ENCODE measurements at regions of chr3 and their contacts with region 1.

Region 1: GRCh38 chr3:39189959-39190269 is 2.5 kb downstream of the XIRP1 start:
- DNase-seq: peak; percentile 64
- ATAC-seq: peak; percentile 46

Region 2: DNA sequence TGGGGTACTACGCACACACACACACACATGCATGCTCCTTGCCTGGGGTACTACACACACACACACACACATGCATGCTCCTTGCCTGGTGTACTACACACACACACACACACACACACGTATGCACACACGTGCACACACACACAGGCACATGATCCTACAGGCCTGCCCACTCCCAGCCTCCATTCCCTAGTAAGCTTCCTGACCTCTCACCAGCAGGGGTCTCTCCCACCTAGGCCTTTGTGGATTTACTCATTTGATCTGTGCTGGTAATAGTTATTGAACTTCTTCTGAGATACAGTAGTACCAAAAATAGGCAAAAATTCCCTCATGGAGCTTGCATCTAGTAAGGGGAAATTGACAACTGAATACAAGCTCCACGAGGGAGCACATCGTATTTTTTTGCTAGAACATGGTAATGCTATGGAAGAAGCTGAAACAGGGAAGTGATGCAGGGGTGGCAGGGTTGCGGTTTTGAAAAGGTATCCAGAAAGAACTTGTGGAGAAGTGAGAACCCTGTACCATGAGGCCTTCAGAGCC is 63.3 kb before region 1 on chr3:
- intact Hi-C with region 1: loop called (anchors 10 kb)
- DNase-seq: peak; percentile 62
- ATAC-seq: peak; percentile 82